H1 (cell line): ENCODE measurements at regions of chr5 and their contacts with region 1.

Region 1: GRCh38 chr5:133996683-133997252 is 8.0 kb downstream of the VDAC1 start:
- DNase-seq: peak in 1 of 2 experiments; percentile 67
- H3K4me3 ChIP-seq: no peak overlapping the region
- H3K27ac ChIP-seq: no peak overlapping the region
- H3K4me1 ChIP-seq: peaks cover 12 to 23% (median 15%) of the 10 kb centered on the region in 4 experiments
- H3K27me3 ChIP-seq: no peaks in the 10 kb centered on the region
- CTCF ChIP-seq: peak in 2 of 3 experiments; percentile 67 to 83; a peak in 3 of 4 replicates
- EP300 ChIP-seq: no peak
- POLR2A ChIP-seq: no peak
- RAD21 ChIP-seq: peak; percentile 26 to 48; a peak in 3 of 4 replicates

Region 2: DNA sequence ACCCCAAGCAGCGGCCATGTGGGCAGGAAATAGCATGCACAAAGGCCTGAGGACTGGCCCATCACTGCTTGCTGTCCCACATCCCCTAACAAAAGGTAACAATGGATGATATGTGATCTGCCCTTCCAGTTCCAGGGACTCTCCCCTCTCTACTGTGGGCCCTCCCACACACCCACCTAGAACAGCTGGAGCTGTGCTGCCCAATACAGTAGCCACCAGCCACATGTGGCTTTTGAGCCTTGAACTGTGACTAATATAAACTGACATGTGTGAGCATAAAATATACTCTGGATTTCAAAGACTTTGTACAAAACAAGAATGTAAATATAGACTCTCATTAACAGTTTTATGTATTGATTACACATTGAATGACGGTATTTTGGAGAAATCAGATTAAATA is 106.4 kb before region 1 on chr5:
- CTCF ChIA-PET with region 1: no interaction called
- POLR2A ChIA-PET with region 1: no interaction called
- DNase-seq: no peak
- H3K4me3 ChIP-seq: no peak overlapping the region
- H3K27ac ChIP-seq: no peak overlapping the region
- H3K4me1 ChIP-seq: no peaks in the 10 kb centered on the region
- H3K27me3 ChIP-seq: no peaks in the 10 kb centered on the region; a peak in 1 of 7 replicates
- CTCF ChIP-seq: no peak
- EP300 ChIP-seq: no peak
- POLR2A ChIP-seq: no peak
- RAD21 ChIP-seq: no peak

Region 3: GRCh38 chr5:133968049-133968980 is 28.5 kb before region 1 on chr5 and contains the start of gene C5orf15:
- CTCF ChIA-PET with region 1: interaction called, 10 read pairs
- POLR2A ChIA-PET with region 1: no interaction called
- DNase-seq: peak; percentile 86 to 91
- H3K4me3 ChIP-seq: peak within 1 kb of the TSS; percentile 76 to 90 (median 88)
- H3K27ac ChIP-seq: peak within 1 kb of the TSS; percentile 87
- H3K4me1 ChIP-seq: peaks cover 0 to 3% (median under 1%) of the 10 kb centered on the region in 4 experiments; a peak in 1 of 7 replicates
- H3K27me3 ChIP-seq: no peaks in the 10 kb centered on the region
- CTCF ChIP-seq: no peak
- EP300 ChIP-seq: no peak
- POLR2A ChIP-seq: peak; percentile 64 to 85
- RAD21 ChIP-seq: no peak
- total RNA-seq, gene C5orf15: 31.7 and 33.3 TPM in 2 replicates

Region 4: DNA sequence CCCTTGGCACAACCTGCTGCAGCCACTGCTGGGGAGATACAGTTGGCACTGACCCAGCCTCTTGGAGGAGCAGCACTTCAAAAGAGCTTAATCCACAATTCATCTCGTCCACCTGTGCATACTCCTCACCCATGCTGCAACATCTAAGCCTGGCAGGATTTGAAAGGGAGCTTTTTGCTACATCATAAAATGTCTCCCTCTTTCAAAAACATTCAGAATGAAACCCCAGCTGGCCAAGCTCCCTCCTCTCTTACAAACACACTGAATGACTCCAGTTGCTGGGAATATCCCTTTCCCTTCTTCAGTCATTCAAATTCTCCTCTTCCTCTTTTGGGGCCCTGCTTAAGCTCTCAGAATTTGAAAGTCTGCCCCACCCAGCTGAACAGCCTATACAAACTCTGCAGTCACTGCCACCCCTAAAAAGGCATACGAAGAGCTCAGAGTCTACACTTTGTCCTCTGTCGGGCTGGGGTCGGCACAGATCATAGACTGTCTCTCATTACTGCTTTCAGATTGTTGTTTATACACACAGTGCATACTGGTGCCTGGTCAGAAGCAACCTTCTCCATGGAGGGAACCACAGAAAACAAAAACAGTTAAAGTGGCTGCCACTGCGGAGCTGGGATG is 19.5 kb before region 1 on chr5:
- CTCF ChIA-PET with region 1: interaction called, 160 read pairs
- POLR2A ChIA-PET with region 1: no interaction called
- DNase-seq: no peak
- H3K4me3 ChIP-seq: no peak overlapping the region
- H3K27ac ChIP-seq: no peak overlapping the region
- H3K4me1 ChIP-seq: no peaks in the 10 kb centered on the region
- H3K27me3 ChIP-seq: no peaks in the 10 kb centered on the region
- CTCF ChIP-seq: no peak
- EP300 ChIP-seq: no peak
- POLR2A ChIP-seq: no peak
- RAD21 ChIP-seq: no peak

Region 5: GRCh38 chr5:134018154-134018985 is 21.6 kb after region 1 on chr5:
- CTCF ChIA-PET with region 1: interaction called, 10 read pairs
- POLR2A ChIA-PET with region 1: no interaction called
- DNase-seq: no peak
- H3K4me3 ChIP-seq: no peak overlapping the region
- H3K27ac ChIP-seq: no peak overlapping the region
- H3K4me1 ChIP-seq: peaks cover 0 to 5% (median 2%) of the 10 kb centered on the region in 4 experiments; a peak in 3 of 7 replicates
- H3K27me3 ChIP-seq: no peaks in the 10 kb centered on the region
- CTCF ChIP-seq: no peak
- EP300 ChIP-seq: no peak
- POLR2A ChIP-seq: no peak
- RAD21 ChIP-seq: no peak

Region 6: GRCh38 chr5:134240421-134240962 is 243.7 kb after region 1 on chr5:
- CTCF ChIA-PET with region 1: no interaction called
- POLR2A ChIA-PET with region 1: no interaction called
- DNase-seq: no peak
- H3K4me3 ChIP-seq: no peak overlapping the region
- H3K27ac ChIP-seq: no peak overlapping the region
- H3K4me1 ChIP-seq: peaks cover 4 to 18% (median 10%) of the 10 kb centered on the region in 4 experiments; a peak in 5 of 7 replicates
- H3K27me3 ChIP-seq: no peaks in the 10 kb centered on the region
- CTCF ChIP-seq: no peak
- EP300 ChIP-seq: no peak
- POLR2A ChIP-seq: no peak
- RAD21 ChIP-seq: no peak